ENCODE measurements at regions of chr17 and their contacts with region 1.

Region 1: DNA sequence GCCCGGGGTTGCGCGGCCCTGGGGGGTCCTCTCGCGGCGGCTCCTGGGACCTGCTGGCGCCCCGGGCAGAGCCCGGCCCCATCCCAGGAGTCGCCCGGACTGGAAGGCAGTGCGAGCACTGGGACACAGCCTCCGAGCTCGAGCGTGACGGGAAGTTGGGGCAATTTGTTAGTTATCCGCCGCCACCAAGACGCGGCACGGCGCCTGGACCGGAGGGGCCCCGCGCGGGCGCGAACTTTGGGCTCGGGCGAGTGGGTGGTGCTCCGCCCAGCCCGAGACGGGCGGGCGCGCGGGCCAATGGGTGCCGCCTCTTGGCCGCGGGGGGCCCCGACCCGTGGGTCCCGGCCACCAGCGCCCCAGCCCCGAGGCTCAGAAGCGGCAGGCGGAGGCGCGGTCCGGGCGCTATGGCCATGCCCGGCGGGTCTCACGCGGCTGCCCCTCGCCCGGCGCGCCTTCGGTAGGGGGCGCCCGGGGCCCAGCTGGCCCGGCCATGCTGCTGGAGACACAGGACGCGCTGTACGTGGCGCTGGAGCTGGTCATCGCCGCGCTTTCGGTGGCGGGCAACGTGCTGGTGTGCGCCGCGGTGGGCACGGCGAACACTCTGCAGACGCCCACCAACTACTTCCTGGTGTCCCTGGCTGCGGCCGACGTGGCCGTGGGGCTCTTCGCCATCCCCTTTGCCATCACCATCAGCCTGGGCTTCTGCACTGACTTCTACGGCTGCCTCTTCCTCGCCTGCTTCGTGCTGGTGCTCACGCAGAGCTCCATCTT is at the start of gene ADORA2B:
- DNase-seq: peak; percentile 75 to 91
- ATAC-seq: peak; percentile 85 to 88
- H3K4me3 ChIP-seq: peak within 1 kb of the TSS; percentile 78
- H3K27ac ChIP-seq: peak within 1 kb of the TSS; percentile 90 to 95
- H3K4me1 ChIP-seq: peaks cover 27% of the 10 kb centered on the region
- CTCF ChIP-seq: peak; percentile 71
- EP300 ChIP-seq: no peak
- POLR2A ChIP-seq: peak; percentile 48
- RAD21 ChIP-seq: peak; percentile 72 to 93
- polyA plus RNA-seq, gene ADORA2B: 10.2 and 14.4 TPM in 2 replicates

Region 2: GRCh38 chr17:15914400-15915170 is 30.4 kb before region 1 on chr17:
- CTCF ChIA-PET with region 1: interaction called, 29 read pairs
- POLR2A ChIA-PET with region 1: no interaction called
- DNase-seq: no peak
- ATAC-seq: no peak
- H3K4me3 ChIP-seq: no peak overlapping the region
- H3K27ac ChIP-seq: peak overlapping the region in 1 of 2 experiments; percentile 7; a peak in 1 of 6 replicates
- H3K4me1 ChIP-seq: peaks cover 31% of the 10 kb centered on the region
- CTCF ChIP-seq: no peak
- EP300 ChIP-seq: no peak
- POLR2A ChIP-seq: no peak
- RAD21 ChIP-seq: no peak

Region 3: DNA sequence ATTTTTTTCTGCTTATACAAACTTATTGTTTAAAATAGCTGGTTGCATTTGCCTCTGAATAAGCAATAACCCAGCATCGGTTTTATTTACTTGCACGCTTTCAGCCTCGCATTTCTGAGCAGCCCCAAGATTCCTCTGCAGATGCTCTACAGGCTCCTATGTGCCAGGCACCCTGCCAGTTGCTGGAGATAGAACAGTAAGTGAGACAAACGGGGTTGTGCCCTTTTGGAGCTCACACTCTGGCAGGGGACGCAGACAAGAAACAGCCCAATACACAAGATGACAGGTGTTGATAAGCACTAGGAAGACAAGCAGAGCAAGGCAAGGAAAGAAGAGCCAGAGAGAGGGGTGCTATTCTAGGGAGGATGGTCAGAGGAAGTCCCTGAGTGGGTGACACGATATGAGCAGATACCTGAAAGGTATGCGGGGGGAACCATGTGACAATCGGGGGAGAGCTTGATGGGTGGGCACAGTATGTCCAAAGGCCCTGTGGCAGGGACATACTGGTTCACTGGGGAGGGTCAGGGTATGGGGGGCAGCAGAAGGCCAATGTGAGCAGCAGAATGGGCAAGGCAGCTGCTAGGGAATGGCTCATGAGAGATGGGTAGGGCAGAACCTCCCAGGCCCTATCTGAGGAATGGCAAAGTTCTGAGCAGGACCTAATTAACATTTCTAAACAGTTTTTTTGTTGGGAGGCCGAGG is 18.8 kb before region 1 on chr17:
- CTCF ChIA-PET with region 1: interaction called, 35 read pairs
- POLR2A ChIA-PET with region 1: no interaction called
- DNase-seq: no peak
- ATAC-seq: no peak
- H3K4me3 ChIP-seq: no peak overlapping the region
- H3K27ac ChIP-seq: peak overlapping the region in 1 of 2 experiments; percentile 27; a peak in 1 of 6 replicates
- H3K4me1 ChIP-seq: peaks cover 3% of the 10 kb centered on the region
- CTCF ChIP-seq: no peak
- EP300 ChIP-seq: no peak
- POLR2A ChIP-seq: no peak
- RAD21 ChIP-seq: no peak

Region 4: DNA sequence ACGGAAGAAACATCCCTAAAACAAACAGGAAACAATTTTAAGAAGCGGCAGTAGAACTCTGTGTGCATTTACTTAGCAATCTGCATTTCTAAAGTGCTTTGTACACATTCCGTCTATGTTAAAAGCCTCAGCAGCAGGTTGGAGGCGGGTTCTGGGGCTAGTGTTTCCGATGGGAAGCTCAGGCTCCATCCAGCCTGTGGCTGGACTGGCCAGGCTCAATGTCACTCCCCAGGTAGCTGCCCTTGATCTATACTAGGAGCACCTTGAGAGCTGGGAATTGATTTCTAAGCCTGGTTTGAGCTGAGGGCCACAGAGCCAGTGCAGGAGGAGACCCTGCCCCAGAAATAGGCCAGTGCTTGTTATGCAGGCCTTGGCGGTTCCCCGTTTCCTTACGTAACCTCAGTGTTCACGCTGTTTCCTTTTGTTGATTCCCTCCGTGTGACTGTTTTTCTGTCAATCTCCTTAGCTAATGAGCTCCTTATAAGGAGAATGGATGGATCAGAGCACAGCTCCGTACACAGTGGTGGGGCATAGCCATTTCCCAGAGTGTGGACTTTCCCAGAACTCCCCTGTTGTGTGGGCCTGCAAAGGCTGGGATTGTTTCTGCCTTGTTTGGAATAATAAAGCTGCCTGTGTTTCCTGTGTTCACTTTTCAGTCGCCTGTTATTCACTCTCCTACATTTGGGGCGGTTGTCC is 21.4 kb after region 1 on chr17:
- CTCF ChIA-PET with region 1: interaction called, 17 read pairs
- POLR2A ChIA-PET with region 1: no interaction called
- DNase-seq: no peak
- ATAC-seq: peak in 1 of 2 experiments; percentile 72; a peak in 3 of 6 replicates
- H3K4me3 ChIP-seq: no peak overlapping the region
- H3K27ac ChIP-seq: peak overlapping the region; percentile 37 to 58; a peak in 5 of 6 replicates
- H3K4me1 ChIP-seq: peaks cover 50% of the 10 kb centered on the region
- CTCF ChIP-seq: no peak
- EP300 ChIP-seq: no peak
- POLR2A ChIP-seq: no peak
- RAD21 ChIP-seq: no peak

Region 5: GRCh38 chr17:15999439-16000350 is 54.8 kb after region 1 on chr17 and contains the starts of genes TTC19 and ZSWIM7:
- CTCF ChIA-PET with region 1: interaction called, 105 read pairs
- POLR2A ChIA-PET with region 1: interaction called, 24 read pairs
- DNase-seq: peak; percentile 99
- ATAC-seq: peak; percentile 94 to 97
- H3K4me3 ChIP-seq: peak within 1 kb of the TSS; percentile 95
- H3K27ac ChIP-seq: peak within 1 kb of the TSS; percentile 94 to 97
- H3K4me1 ChIP-seq: peaks cover 10% of the 10 kb centered on the region; the same call in 1 of the 3 replicates
- CTCF ChIP-seq: no peak
- EP300 ChIP-seq: no peak
- POLR2A ChIP-seq: peak; percentile 97
- RAD21 ChIP-seq: no peak; a peak in 2 of 5 replicates
- polyA plus RNA-seq, gene TTC19: 16.6 and 23.6 TPM in 2 replicates
- polyA plus RNA-seq, gene ZSWIM7: 65.5 and 72.7 TPM in 2 replicates

Measured in A549 (cell line).